Activated T-helper 1 cell treated with anti-CD3 and anti-CD28 coated beads, Interleukin-12 subunit alpha, Interleukin-12 subunit beta, Interleukin-2, Interleukin-4 antibody, amounts not matched to agents 30 ng/mL and 10 ng/mL and 1 ng/mL, durations not matched to agents 14 hours and 24 hours and 36 hours (primary cell): ENCODE measurements at regions of chr6 and their contacts with region 1.

Region 1: DNA sequence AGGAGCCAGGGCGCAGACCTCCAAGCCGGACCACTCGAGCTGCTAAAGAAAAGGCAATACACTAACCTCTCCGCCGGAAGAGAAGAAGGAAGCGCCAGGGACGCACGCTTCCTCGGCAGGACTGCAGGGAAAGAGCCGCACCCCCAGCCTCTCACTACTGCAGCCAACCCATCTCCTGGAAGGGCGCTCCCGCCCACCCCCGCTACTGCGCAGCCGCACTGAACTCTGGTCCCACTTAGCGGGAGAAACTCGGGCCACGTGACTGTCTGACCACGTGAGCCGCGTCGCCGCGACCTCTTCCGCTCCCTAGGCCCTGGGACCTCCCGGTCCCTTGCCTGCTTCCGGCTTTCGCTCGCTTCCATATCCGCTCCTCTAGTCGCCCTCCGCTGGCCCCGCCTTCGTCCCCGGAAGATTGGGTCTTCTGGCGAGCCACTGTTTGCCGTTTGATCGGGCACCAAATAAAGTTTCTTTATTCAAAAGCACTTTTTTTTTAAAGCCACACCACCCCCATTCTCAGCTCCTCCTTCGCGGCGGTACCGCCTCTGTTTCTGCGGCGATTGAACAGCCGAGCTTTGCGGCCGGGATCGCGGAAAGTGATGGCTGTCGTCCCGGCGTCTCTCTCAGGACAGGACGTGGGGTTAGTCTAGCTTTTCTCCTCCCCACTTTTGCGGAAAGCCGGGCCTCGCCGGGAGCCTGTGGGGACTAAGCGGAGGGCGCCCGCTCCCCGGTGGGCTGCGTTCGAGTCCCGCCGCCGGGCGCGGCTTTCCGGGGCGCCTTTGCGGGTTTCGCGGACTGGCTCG is at the start of gene RMND1:
- DNase-seq: peak; percentile 99
- H3K4me3 Mint-ChIP-seq: peak within 1 kb of the TSS; percentile 97
- H3K27ac Mint-ChIP-seq: peak within 1 kb of the TSS; percentile 90
- H3K4me1 Mint-ChIP-seq: peaks cover 29% of the 10 kb centered on the region
- H3K27me3 Mint-ChIP-seq: peaks cover 4% of the 10 kb centered on the region
- total RNA-seq, gene RMND1: 20.0 and 20.5 TPM in 2 replicates

Region 2: GRCh38 chr6:149746147-149746946 is 1705.8 kb before region 1 on chr6 and contains the start of gene NUP43:
- intact Hi-C with region 1: loop called (anchors 5 kb)
- DNase-seq: peak; percentile 90
- H3K4me3 Mint-ChIP-seq: peak within 1 kb of the TSS; percentile 99
- H3K27ac Mint-ChIP-seq: peak within 1 kb of the TSS; percentile 87
- H3K4me1 Mint-ChIP-seq: peaks cover 31% of the 10 kb centered on the region
- H3K27me3 Mint-ChIP-seq: no peaks in the 10 kb centered on the region
- total RNA-seq, gene NUP43: 81.3 and 90.5 TPM in 2 replicates

Region 3: GRCh38 chr6:150865406-150866146 is 586.6 kb before region 1 on chr6 and contains the start of gene MTHFD1L:
- intact Hi-C with region 1: loop called (anchors 1 kb)
- DNase-seq: peak; percentile 74
- H3K4me3 Mint-ChIP-seq: peak within 1 kb of the TSS; percentile 86
- H3K27ac Mint-ChIP-seq: peak within 1 kb of the TSS; percentile 91
- H3K4me1 Mint-ChIP-seq: peaks cover 38% of the 10 kb centered on the region
- H3K27me3 Mint-ChIP-seq: peaks cover 2% of the 10 kb centered on the region
- total RNA-seq, gene MTHFD1L: 121 and 125 TPM in 2 replicates

Region 4: GRCh38 chr6:151409260-151409659 is 42.9 kb before region 1 on chr6:
- intact Hi-C with region 1: loop called (anchors 1 kb)
- DNase-seq: no peak
- H3K4me3 Mint-ChIP-seq: no peak overlapping the region
- H3K27ac Mint-ChIP-seq: peak overlapping the region; percentile 56
- H3K4me1 Mint-ChIP-seq: peaks cover 13% of the 10 kb centered on the region
- H3K27me3 Mint-ChIP-seq: no peaks in the 10 kb centered on the region

Region 5: GRCh38 chr6:151702851-151703611 is 250.9 kb after region 1 on chr6:
- intact Hi-C with region 1: loop called (anchors 5 kb)
- DNase-seq: no peak
- H3K4me3 Mint-ChIP-seq: no peak overlapping the region
- H3K27ac Mint-ChIP-seq: peak overlapping the region; percentile 59
- H3K4me1 Mint-ChIP-seq: peaks cover 56% of the 10 kb centered on the region
- H3K27me3 Mint-ChIP-seq: peaks cover 10% of the 10 kb centered on the region

Region 6: GRCh38 chr6:152170705-152171667 is 718.8 kb after region 1 on chr6:
- intact Hi-C with region 1: loop called (anchors 2 kb)
- DNase-seq: peak; percentile 62
- H3K4me3 Mint-ChIP-seq: peak overlapping the region; percentile 59
- H3K27ac Mint-ChIP-seq: peak overlapping the region; percentile 95
- H3K4me1 Mint-ChIP-seq: peaks cover 25% of the 10 kb centered on the region
- H3K27me3 Mint-ChIP-seq: no peaks in the 10 kb centered on the region

Region 7: DNA sequence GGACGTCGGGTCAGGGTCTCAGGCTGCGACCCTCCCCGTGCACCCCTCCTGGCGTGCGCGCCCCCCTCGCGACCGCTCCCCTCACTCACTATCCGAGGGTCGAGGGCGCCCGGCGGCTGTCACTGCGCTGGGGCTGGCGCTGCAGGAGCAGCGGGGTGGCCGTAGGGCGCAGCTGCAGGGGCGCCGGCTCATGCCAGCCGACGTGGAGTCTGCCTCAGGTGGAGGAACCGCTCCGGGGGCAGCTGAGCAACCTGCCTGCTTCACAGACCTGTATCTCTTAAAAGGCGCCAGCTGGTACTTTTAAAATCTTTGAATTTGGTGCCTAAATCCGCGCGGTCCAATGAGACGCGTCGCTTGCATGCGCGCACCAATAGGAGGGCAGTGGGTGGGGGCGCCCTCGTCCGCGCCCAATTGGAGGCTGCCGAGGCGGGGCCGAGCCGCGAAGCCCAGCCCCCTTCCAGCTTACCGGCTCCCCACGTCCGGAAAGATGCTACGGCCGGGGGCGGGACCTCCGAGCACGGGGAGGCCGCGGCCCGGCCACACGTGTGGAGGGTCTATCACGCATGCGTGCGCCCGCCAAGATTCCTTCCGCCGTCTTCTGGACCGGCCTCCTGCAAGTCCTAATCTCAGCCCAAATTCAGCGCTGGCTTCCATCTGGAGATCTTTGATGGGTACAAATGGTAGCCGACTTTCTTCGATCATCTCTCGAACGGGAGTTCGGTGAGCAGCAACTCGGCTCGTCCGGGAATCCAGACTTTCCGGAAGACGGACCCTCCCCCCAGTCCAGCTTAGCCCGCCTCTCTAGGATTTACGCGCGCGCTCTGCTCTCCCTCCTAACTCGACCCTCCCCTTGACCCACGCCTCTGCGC is 1530.9 kb after region 1 on chr6 and contains the start of gene FBXO5:
- intact Hi-C with region 1: loop called (anchors 2 kb)
- DNase-seq: peak; percentile 98
- H3K4me3 Mint-ChIP-seq: peak within 1 kb of the TSS; percentile 96
- H3K27ac Mint-ChIP-seq: peak within 1 kb of the TSS; percentile 100
- H3K4me1 Mint-ChIP-seq: peaks cover 53% of the 10 kb centered on the region
- H3K27me3 Mint-ChIP-seq: no peaks in the 10 kb centered on the region
- total RNA-seq, gene FBXO5: 29.4 and 33.2 TPM in 2 replicates